ENCODE measurements at regions of chr2 and their contacts with region 1.

Region 1: DNA sequence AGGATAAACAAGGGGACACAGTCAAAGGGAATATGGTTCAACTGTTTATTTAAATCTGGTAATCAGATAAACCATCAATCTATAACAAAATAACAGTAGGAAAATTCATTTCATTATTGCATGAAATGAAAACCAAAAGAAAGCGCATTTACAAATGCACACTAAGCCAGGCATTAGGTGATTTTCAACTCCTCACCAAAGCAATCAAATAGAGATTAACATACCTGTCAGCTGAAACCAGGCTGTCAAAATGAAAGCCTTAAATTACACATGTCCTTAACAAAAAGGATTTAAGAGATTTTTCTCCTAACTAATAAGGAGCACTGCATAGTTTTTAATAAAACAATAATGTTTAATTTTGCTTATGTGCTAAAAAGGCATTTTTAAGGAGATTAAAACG is 23.0 kb downstream of the STK39 start:
- DNase-seq: no peak
- H3K4me3 ChIP-seq: no peak overlapping the region
- H3K27ac ChIP-seq: no peak overlapping the region
- H3K4me1 ChIP-seq: peaks cover 23% of the 10 kb centered on the region
- H3K27me3 ChIP-seq: no peaks in the 10 kb centered on the region
- CTCF ChIP-seq: no peak

Region 2: DNA sequence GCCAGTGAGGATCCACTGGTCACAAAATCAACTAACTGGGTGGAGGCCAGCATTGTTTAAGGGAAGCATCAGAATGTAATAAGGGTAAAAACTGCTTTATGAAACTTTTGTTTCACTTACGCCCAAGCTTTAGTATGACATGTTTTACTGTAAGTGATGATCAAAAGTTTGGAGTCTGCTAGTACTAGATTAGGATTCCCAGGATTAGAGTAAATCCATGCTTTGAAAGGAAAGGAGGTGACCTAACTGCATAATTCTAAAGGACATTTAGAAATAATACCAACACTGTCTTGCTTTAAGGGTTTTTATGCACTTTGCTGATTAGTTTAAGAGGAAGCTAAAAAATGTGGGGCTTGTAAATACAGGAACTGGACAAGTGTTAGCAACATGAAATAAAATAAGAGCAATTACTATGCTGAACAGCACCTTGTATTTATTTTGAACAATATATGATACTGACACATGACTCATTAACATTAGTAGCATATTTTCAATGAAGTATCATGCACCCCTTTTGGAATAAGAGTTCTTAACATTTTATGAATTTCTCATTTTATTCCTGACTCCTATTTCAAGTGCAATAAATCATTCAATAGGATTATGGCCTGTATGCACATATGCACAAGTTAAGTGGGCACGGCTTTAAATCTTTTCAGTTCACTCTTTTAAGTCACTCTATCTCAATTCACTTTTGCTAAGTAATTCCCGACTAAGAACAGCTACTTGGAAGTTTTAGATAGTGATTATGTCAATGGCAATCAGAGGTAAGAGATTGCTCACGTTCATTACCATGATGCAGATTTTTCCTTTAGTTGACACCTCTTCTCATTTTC is 39.4 kb before region 1 on chr2:
- CTCF ChIA-PET with region 1: no interaction called
- dilution Hi-C with region 1: no loop called
- in situ Hi-C with region 1: no loop called
- intact Hi-C with region 1: no loop called
- DNase-seq: peak; percentile 29
- H3K4me3 ChIP-seq: no peak overlapping the region
- H3K27ac ChIP-seq: no peak overlapping the region
- H3K4me1 ChIP-seq: peaks cover 53% of the 10 kb centered on the region
- H3K27me3 ChIP-seq: no peaks in the 10 kb centered on the region
- CTCF ChIP-seq: no peak

Region 3: DNA sequence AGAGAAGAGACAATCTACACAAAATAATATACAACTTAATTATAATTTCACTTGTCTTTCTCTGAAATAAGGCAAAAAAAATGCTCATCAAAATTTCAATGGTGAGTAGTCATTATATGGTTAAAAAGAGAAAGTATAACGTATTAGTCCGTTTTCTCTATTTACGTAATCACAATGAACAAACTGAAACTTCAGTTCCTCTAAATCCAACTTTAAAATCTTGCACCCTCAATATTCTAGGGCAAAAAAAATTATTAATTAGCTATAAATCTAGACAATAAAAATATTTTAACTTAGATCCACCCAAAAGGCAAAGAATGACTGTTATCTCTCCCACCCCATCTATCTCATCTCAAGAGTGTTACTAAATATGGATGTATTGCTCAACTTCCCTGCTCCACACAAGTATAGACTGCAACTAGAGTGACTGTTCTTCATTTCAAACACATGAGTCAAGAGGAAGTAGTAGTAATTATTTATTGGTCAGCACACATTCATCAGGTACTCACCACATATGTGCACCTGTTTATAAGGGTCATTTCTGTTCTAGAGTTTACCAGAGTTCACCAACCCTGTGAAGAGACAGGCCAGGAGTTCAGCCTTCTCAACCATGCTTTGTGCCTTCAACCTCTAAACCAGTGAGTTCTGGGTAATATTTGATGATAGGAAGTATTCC is 13.3 kb before region 1 on chr2:
- CTCF ChIA-PET with region 1: no interaction called
- dilution Hi-C with region 1: no loop called
- in situ Hi-C with region 1: no loop called
- intact Hi-C with region 1: no loop called
- DNase-seq: peak; percentile 95
- H3K4me3 ChIP-seq: peak overlapping the region; percentile 2 to 52 (median 49)
- H3K27ac ChIP-seq: peak overlapping the region; percentile 76
- H3K4me1 ChIP-seq: peaks cover 42% of the 10 kb centered on the region
- H3K27me3 ChIP-seq: no peaks in the 10 kb centered on the region
- CTCF ChIP-seq: no peak

Region 4: GRCh38 chr2:168241208-168241607 is 16.9 kb after region 1 on chr2:
- CTCF ChIA-PET with region 1: no interaction called
- dilution Hi-C with region 1: no loop called
- in situ Hi-C with region 1: no loop called
- intact Hi-C with region 1: loop called (anchors 2 kb)
- DNase-seq: peak; percentile 63
- H3K4me3 ChIP-seq: no peak overlapping the region
- H3K27ac ChIP-seq: no peak overlapping the region
- H3K4me1 ChIP-seq: peaks cover 36% of the 10 kb centered on the region
- H3K27me3 ChIP-seq: no peaks in the 10 kb centered on the region
- CTCF ChIP-seq: no peak

Measured in mammary epithelial cell (primary cell).